ENCODE measurements at regions of chr13 and their contacts with region 1.

Region 1: DNA sequence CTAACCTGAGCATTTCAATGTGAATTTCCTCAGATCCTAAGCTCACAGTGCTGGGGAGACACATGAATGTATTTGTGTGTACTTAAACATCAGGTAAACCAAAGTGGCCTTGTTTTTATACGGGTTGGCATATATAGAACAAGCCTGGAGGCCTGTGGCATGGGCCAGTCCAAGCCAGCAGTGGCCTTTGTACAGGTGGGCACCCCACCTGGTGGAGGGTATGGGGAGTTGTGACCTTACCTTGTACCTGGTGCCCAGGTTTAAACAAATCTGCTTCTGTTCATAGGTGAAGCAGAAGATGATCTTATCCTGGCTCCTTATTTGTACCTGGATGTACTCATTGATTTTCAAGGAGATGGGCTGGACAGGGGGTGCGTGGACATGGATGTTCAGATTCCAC is 71.0 kb downstream of the ERICH6B start:
- DNase-seq: no peak
- H3K4me3 ChIP-seq: no peak overlapping the region
- H3K27ac ChIP-seq: no peak overlapping the region
- H3K4me1 ChIP-seq: no peaks in the 10 kb centered on the region
- H3K27me3 ChIP-seq: no peaks in the 10 kb centered on the region
- CTCF ChIP-seq: no peak

Region 2: DNA sequence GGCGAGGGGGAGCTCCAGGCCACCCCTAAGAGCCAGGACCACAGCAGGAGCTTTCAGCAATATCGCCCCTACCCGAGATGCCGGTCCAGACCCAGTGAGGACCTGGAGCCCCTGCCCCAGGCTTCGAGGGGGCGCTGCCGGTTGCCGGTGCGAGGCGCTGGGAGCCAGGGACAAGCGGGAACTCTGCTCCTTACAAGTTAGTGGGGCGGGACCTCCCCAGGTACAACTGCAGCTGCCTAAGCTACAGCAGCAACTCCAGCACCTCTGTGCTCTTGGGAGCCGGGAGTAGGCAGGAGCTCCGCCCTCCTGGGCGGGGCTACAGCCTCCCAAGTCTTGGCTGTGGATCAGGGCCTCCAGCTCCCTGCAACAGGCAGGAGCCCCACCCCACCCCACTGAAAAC is 953.2 kb before region 1 on chr13:
- CTCF ChIA-PET with region 1: no interaction called
- POLR2A ChIA-PET with region 1: no interaction called
- intact Hi-C with region 1: no loop called
- DNase-seq: no peak
- H3K4me3 ChIP-seq: no peak overlapping the region
- H3K27ac ChIP-seq: no peak overlapping the region
- H3K4me1 ChIP-seq: no peaks in the 10 kb centered on the region
- H3K27me3 ChIP-seq: no peaks in the 10 kb centered on the region
- CTCF ChIP-seq: no peak

Region 3: DNA sequence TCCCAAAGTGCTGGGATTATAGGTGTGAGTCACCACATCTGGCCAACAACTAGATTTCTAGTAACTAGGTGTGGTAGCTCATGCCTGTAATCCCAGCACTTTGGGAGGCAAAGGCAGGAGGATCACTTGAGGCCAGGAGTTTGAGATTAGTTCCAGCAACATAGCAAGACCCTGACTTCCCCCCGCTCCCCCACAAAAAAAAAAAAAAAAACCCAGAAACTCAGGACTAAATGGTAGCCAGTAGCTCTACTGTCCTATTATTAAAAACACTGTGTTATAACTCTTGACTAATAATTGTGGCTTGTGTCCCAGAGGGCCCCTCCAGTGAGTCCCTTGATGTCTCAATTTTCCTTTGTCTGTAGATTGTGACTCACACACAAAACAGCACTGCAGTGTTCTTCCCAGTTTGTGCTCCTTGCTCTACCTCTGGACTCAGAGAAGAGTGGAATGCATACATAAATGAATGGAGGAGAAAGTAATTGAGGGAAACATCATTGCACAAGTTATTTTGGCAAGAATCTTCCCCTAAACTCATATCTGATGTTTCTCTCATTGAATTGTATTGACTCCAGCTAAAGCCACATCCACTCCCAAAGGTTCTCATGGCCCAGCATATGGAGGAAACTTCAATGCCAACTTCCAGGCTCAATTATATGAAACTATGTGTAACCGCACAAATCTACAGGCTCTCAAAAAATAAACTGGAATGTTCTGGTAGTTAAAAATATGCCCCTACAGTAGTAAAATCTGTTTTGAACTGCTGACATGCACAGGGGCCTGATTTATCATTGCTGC is 212.3 kb before region 1 on chr13:
- CTCF ChIA-PET with region 1: no interaction called
- POLR2A ChIA-PET with region 1: no interaction called
- intact Hi-C with region 1: no loop called
- DNase-seq: peak; percentile 85
- H3K4me3 ChIP-seq: no peak overlapping the region
- H3K27ac ChIP-seq: peak overlapping the region; percentile 72
- H3K4me1 ChIP-seq: peaks cover 92% of the 10 kb centered on the region
- H3K27me3 ChIP-seq: no peaks in the 10 kb centered on the region
- CTCF ChIP-seq: no peak

Region 4: DNA sequence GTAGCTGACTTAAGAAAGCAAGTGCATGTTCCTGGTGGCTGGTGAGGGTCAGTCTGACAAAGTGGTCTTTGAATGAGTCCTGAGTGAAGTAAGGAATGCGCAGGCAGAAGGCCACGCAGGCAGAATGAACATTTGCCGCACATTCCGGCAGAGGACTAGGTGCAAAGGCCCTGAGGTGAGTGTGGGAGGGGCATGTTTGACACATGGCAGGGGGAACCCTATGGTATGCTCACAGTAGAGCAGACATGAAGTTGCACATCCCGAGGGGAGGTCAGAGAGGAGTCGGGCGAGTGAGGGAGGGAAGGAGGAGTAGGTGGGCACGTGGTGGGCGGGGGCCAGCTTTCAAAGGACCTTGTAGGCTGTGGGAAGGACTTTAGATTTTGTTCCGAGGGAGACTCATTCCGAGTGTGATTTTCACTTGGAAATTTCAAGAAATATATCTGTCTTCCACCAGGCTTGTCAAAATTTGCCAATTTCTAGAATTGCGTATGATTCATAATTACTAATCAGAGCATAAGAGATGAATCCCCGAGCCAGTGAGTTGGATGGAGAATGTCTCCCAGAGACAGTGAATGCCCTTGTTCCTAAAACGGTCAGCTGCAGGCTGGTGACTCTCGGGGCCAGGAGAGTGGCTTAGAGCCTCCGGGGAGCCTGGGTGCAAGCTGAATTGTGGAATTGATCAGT is 30.8 kb after region 1 on chr13:
- CTCF ChIA-PET with region 1: no interaction called
- POLR2A ChIA-PET with region 1: no interaction called
- intact Hi-C with region 1: loop called (anchors 1 kb)
- DNase-seq: no peak
- H3K4me3 ChIP-seq: no peak overlapping the region
- H3K27ac ChIP-seq: no peak overlapping the region
- H3K4me1 ChIP-seq: peaks cover 6% of the 10 kb centered on the region
- H3K27me3 ChIP-seq: no peaks in the 10 kb centered on the region
- CTCF ChIP-seq: no peak